Activated CD4-positive, alpha-beta memory T cell treated with anti-CD3 and anti-CD28 coated beads, Interleukin-2, amount 10 ng/mL, durations not matched to agents 7 days and 5 days (primary cell): ENCODE measurements at regions of chr16 and their contacts with region 1.

Region 1: DNA sequence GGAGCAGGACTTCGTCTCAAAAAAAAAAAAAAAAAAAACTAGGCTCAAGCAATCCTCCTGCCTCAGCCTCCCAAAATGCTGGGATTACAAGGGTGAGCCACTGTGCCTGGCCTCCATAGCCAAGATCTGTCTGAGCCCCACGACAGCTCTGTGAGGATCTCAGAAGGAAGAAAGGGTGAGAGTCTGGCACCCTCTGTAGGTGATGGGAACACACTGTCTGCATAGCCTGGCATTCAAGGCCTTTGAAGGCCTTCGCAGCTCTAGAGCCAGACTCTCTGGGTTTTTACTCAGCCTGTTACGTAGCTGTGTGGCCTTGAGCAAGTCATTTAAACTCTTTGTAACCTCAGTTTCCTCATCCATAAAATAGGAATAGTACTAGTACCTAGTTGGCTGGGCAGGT is 6.3 kb upstream of the XPO6 start:
- DNase-seq: peak; percentile 68
- H3K4me3 Mint-ChIP-seq: no peak overlapping the region
- H3K27ac Mint-ChIP-seq: no peak overlapping the region
- H3K4me1 Mint-ChIP-seq: peaks cover 5% of the 10 kb centered on the region
- H3K27me3 Mint-ChIP-seq: no peaks in the 10 kb centered on the region

Region 2: DNA sequence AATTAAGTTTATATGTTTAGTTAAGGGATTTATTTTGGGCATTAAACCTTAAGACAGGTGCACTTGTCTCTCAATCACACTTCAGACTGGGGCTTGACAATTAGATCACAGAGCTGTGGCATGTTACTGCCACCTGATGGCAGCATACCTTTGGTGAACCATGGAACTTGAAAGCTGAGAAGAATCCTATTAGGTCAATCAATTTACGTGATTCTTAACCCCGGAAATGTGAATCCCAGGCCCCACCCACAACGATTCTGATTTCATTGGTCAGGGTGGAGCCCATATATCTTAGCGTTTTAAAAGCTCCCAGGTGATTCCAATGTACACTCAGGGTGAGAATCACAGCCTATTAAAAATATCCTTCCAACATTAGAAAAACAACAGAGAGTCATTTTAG is 245.6 kb before region 1 on chr16:
- CTCF ChIA-PET with region 1: interaction called, 26 read pairs
- POLR2A ChIA-PET with region 1: no interaction called
- DNase-seq: peak; percentile 60
- H3K4me3 Mint-ChIP-seq: no peak overlapping the region
- H3K27ac Mint-ChIP-seq: no peak overlapping the region
- H3K4me1 Mint-ChIP-seq: peaks cover 5% of the 10 kb centered on the region
- H3K27me3 Mint-ChIP-seq: peaks cover 26% of the 10 kb centered on the region

Region 3: GRCh38 chr16:28069971-28070794 is 147.9 kb before region 1 on chr16:
- CTCF ChIA-PET with region 1: interaction called, 12 read pairs
- POLR2A ChIA-PET with region 1: no interaction called
- DNase-seq: no peak
- H3K4me3 Mint-ChIP-seq: no peak overlapping the region
- H3K27ac Mint-ChIP-seq: no peak overlapping the region
- H3K4me1 Mint-ChIP-seq: no peaks in the 10 kb centered on the region
- H3K27me3 Mint-ChIP-seq: peaks cover 15% of the 10 kb centered on the region

Region 4: DNA sequence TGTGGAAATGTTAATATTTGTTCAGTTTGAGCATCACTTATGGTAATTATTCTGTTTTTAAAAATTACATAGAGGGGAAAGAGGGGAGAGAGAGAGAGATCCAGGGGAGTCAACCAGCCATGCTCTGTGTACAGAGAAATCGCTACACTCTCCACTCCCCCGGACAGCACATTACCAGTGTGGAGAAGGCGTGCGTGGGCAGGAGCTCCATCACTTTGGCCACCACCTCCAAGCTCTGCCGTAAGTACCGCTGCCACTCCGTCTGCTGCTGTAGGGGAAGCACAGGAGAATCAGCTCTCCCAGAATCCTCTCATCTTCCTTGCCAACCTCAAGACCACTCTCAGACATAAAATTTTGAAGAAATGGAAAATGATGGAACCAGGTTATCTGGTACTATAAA is 84.4 kb before region 1 on chr16:
- CTCF ChIA-PET with region 1: interaction called, 85 read pairs
- POLR2A ChIA-PET with region 1: interaction called, 123 read pairs
- DNase-seq: no peak
- H3K4me3 Mint-ChIP-seq: no peak overlapping the region
- H3K27ac Mint-ChIP-seq: no peak overlapping the region
- H3K4me1 Mint-ChIP-seq: peaks cover 26% of the 10 kb centered on the region
- H3K27me3 Mint-ChIP-seq: no peaks in the 10 kb centered on the region